ENCODE measurements at regions of chr9 and their contacts with region 1.

Region 1: GRCh38 chr9:112333639-112334431 is 416 bp upstream of the PTBP3 start:
- DNase-seq: peak; percentile 86 to 89 (median 87)
- H3K4me3 ChIP-seq: peak overlapping the region; percentile 31 to 81
- H3K4me3 Mint-ChIP-seq: peak overlapping the region; percentile 81 to 96 (median 94)
- H3K27ac ChIP-seq: peak overlapping the region; percentile 92
- H3K27ac Mint-ChIP-seq: peak overlapping the region; percentile 82 to 96 (median 92)
- H3K4me1 ChIP-seq: peaks cover 41% of the 10 kb centered on the region
- H3K4me1 Mint-ChIP-seq: peaks cover 23 to 45% (median 28%) of the 10 kb centered on the region in 4 donors
- H3K27me3 ChIP-seq: no peaks in the 10 kb centered on the region
- H3K27me3 Mint-ChIP-seq: no peaks in the 10 kb centered on the region

Region 2: GRCh38 chr9:111525056-111525977 is 808.5 kb before region 1 on chr9 and contains the start of gene ZNF483:
- CTCF ChIA-PET with region 1: no interaction called
- POLR2A ChIA-PET with region 1: no interaction called
- intact Hi-C with region 1: loop called (anchors 1 kb)
- DNase-seq: peak; percentile 71 to 95 (median 79)
- H3K4me3 ChIP-seq: peak within 1 kb of the TSS; percentile 54 to 87
- H3K4me3 Mint-ChIP-seq: peak within 1 kb of the TSS; percentile 95 to 99 (median 96)
- H3K27ac ChIP-seq: peak within 1 kb of the TSS; percentile 74
- H3K27ac Mint-ChIP-seq: peak within 1 kb of the TSS; percentile 95 to 100 (median 98)
- H3K4me1 ChIP-seq: peaks cover 9% of the 10 kb centered on the region
- H3K4me1 Mint-ChIP-seq: peaks cover 21 to 27% (median 21%) of the 10 kb centered on the region in 4 donors
- H3K27me3 ChIP-seq: no peaks in the 10 kb centered on the region
- H3K27me3 Mint-ChIP-seq: peaks cover 0 to 6% of the 10 kb centered on the region in 2 donors
- total RNA-seq, gene ZNF483: 17.6 to 22.9 TPM

Region 3: GRCh38 chr9:112050544-112051475 is 283.0 kb before region 1 on chr9:
- CTCF ChIA-PET with region 1: no interaction called
- POLR2A ChIA-PET with region 1: no interaction called
- intact Hi-C with region 1: no loop called
- DNase-seq: no peak
- H3K4me3 ChIP-seq: no peak overlapping the region
- H3K4me3 Mint-ChIP-seq: no peak overlapping the region
- H3K27ac ChIP-seq: no peak overlapping the region
- H3K27ac Mint-ChIP-seq: no peak overlapping the region
- H3K4me1 ChIP-seq: no peaks in the 10 kb centered on the region
- H3K4me1 Mint-ChIP-seq: peaks cover 6 to 14% (median 8%) of the 10 kb centered on the region in 4 donors
- H3K27me3 ChIP-seq: no peaks in the 10 kb centered on the region
- H3K27me3 Mint-ChIP-seq: no peaks in the 10 kb centered on the region

Region 4: DNA sequence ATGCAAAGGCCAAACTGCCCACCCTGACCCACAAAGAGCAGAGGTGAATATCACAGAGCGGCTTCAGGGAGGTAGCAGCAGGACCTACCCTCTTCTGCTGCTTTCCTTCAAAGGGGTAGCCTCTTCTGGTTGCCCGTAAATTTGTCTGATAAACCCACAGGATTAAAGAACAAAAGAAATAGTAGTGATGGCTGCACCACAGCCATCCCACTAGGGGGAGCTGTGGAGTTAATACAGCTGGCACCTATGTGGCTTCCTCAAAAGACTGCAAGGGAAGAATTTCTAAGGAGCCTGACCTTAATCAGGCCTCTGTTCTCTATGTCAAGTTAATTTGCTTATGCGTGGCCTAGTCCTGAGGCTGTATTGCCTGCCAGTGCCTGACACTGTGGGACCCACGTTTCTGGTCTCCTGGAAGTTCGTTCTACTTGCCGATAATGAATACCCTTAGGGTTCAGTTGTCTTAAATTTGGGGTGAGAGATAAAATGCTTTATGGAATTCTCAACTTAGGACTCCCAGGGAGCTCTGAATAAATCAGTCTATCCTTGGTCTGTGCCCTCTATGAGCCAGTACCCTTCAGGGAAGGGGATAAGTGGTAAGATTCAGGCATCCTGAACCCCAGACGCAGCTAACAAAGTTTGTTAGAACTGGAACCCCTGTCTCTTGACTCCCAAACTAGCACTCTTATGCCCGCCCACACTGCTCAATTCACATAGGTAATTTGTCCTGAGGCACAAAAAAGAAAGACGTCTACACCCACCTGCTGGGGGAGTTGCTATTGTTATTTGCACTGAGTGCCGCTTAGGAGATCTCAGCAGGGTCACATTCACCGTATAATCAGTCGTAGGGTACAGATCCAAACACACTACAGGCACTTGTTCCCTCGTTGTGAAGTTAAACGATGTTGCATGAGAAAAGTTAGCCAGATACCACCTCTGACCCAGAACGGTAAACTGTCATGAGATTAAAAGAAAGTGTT is 235.8 kb before region 1 on chr9:
- CTCF ChIA-PET with region 1: interaction called, 18 read pairs
- POLR2A ChIA-PET with region 1: interaction called, 8 read pairs
- intact Hi-C with region 1: loop called (anchors 1 kb)
- DNase-seq: peak; percentile 64 to 73 (median 71)
- H3K4me3 ChIP-seq: no peak overlapping the region
- H3K4me3 Mint-ChIP-seq: no peak overlapping the region
- H3K27ac ChIP-seq: no peak overlapping the region
- H3K27ac Mint-ChIP-seq: no peak overlapping the region
- H3K4me1 ChIP-seq: peaks cover 21% of the 10 kb centered on the region
- H3K4me1 Mint-ChIP-seq: peaks cover 17 to 33% (median 23%) of the 10 kb centered on the region in 4 donors
- H3K27me3 ChIP-seq: no peaks in the 10 kb centered on the region
- H3K27me3 Mint-ChIP-seq: no peaks in the 10 kb centered on the region

Region 5: GRCh38 chr9:112212926-112213325 is 120.9 kb before region 1 on chr9:
- CTCF ChIA-PET with region 1: no interaction called
- POLR2A ChIA-PET with region 1: no interaction called
- intact Hi-C with region 1: no loop called
- DNase-seq: no peak
- H3K4me3 ChIP-seq: no peak overlapping the region
- H3K4me3 Mint-ChIP-seq: no peak overlapping the region
- H3K27ac ChIP-seq: no peak overlapping the region
- H3K27ac Mint-ChIP-seq: no peak overlapping the region
- H3K4me1 ChIP-seq: no peaks in the 10 kb centered on the region
- H3K4me1 Mint-ChIP-seq: peaks cover 0 to 4% (median 2%) of the 10 kb centered on the region in 4 donors
- H3K27me3 ChIP-seq: no peaks in the 10 kb centered on the region
- H3K27me3 Mint-ChIP-seq: no peaks in the 10 kb centered on the region

Region 6: GRCh38 chr9:112224401-112225289 is 109.2 kb before region 1 on chr9:
- CTCF ChIA-PET with region 1: no interaction called
- POLR2A ChIA-PET with region 1: interaction called, 8 read pairs
- intact Hi-C with region 1: loop called (anchors 5 kb)
- DNase-seq: no peak
- H3K4me3 ChIP-seq: no peak overlapping the region
- H3K4me3 Mint-ChIP-seq: no peak overlapping the region
- H3K27ac ChIP-seq: no peak overlapping the region
- H3K27ac Mint-ChIP-seq: peak overlapping the region in 6 of 7 donors; percentile 13 to 88 (median 34)
- H3K4me1 ChIP-seq: no peaks in the 10 kb centered on the region
- H3K4me1 Mint-ChIP-seq: peaks cover 8 to 15% (median 12%) of the 10 kb centered on the region in 4 donors
- H3K27me3 ChIP-seq: no peaks in the 10 kb centered on the region
- H3K27me3 Mint-ChIP-seq: no peaks in the 10 kb centered on the region

Region 7: GRCh38 chr9:112322701-112323377 is 11.0 kb before region 1 on chr9:
- CTCF ChIA-PET with region 1: interaction called, 8 read pairs
- POLR2A ChIA-PET with region 1: interaction called, 26 read pairs
- intact Hi-C with region 1: loop called (anchors 1 kb)
- DNase-seq: no peak
- H3K4me3 ChIP-seq: no peak overlapping the region
- H3K4me3 Mint-ChIP-seq: peak overlapping the region in 4 of 8 donors; percentile 11 to 65 (median 34)
- H3K27ac ChIP-seq: no peak overlapping the region
- H3K27ac Mint-ChIP-seq: peak overlapping the region in 3 of 7 donors; percentile 5 to 63 (median 53)
- H3K4me1 ChIP-seq: peaks cover 57% of the 10 kb centered on the region
- H3K4me1 Mint-ChIP-seq: peaks cover 43 to 83% (median 62%) of the 10 kb centered on the region in 4 donors
- H3K27me3 ChIP-seq: no peaks in the 10 kb centered on the region
- H3K27me3 Mint-ChIP-seq: no peaks in the 10 kb centered on the region

Region 8: DNA sequence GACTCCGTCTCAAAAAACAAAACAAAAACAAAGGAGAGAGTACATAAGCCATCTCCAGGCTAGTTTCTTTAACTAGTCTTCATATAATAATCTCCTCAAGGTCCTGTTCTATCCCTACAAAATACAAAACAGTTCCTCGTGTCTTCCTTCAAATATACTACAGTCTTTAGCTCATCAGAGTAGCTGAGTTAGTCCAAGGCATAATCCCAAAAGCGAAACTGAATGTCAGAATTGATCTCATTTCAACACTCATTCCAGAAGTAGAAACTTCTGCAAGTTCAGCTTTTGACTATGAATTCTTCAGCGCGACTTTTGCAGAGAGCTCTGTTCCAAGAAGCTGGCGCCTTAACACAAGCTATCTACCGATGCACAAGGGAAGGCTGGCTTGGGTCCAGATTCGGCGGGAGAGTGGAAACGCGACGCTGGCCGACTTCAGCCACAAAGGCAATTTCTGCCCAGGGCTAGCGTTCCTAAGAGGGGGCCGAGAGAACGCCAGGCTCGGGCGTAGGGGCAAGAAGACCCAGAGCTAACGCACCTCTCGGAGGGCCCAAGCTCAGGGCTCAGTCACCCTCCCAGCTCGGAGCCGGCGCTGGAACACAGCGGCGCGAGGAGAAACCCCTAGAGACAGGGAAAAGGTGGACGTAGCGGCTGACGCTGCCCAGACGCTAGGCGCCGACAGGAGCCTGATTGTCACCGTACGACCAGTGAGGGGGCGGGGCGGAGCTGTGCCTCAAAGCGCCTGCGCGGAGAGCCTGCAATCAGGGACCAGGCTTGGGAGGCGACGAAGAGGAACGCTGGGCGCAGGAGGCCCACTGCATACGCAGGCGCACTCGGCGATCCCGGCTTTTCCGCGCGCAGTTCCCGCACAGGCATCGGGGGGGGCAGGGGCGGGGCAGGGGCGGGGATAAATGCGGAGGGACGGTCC is 45.6 kb after region 1 on chr9:
- CTCF ChIA-PET with region 1: interaction called, 4 read pairs
- POLR2A ChIA-PET with region 1: interaction called, 40 read pairs
- intact Hi-C with region 1: loop called (anchors 1 kb)
- DNase-seq: peak; percentile 93 to 96 (median 94)
- H3K4me3 ChIP-seq: peak overlapping the region; percentile 90 to 96
- H3K4me3 Mint-ChIP-seq: peak overlapping the region; percentile 97 to 100 (median 100)
- H3K27ac ChIP-seq: peak overlapping the region; percentile 91
- H3K27ac Mint-ChIP-seq: peak overlapping the region; percentile 93 to 100 (median 99)
- H3K4me1 ChIP-seq: peaks cover 23% of the 10 kb centered on the region
- H3K4me1 Mint-ChIP-seq: peaks cover 32 to 65% (median 45%) of the 10 kb centered on the region in 4 donors
- H3K27me3 ChIP-seq: no peaks in the 10 kb centered on the region
- H3K27me3 Mint-ChIP-seq: no peaks in the 10 kb centered on the region

Region 9: GRCh38 chr9:112750111-112750767 is 416.4 kb after region 1 on chr9 and contains the start of gene SNX30:
- CTCF ChIA-PET with region 1: no interaction called
- POLR2A ChIA-PET with region 1: interaction called, 8 read pairs
- intact Hi-C with region 1: loop called (anchors 5 kb)
- DNase-seq: peak; percentile 76 to 84 (median 80)
- H3K4me3 ChIP-seq: peak within 1 kb of the TSS; percentile 57 to 77
- H3K4me3 Mint-ChIP-seq: peak within 1 kb of the TSS; percentile 85 to 93 (median 90)
- H3K27ac ChIP-seq: peak within 1 kb of the TSS; percentile 67
- H3K27ac Mint-ChIP-seq: peak within 1 kb of the TSS; percentile 87 to 97 (median 96)
- H3K4me1 ChIP-seq: peaks cover 62% of the 10 kb centered on the region
- H3K4me1 Mint-ChIP-seq: peaks cover 44 to 70% (median 56%) of the 10 kb centered on the region in 4 donors
- H3K27me3 ChIP-seq: no peaks in the 10 kb centered on the region
- H3K27me3 Mint-ChIP-seq: no peaks in the 10 kb centered on the region
- total RNA-seq, gene SNX30: 10.8 to 10.9 TPM